ENCODE measurements at regions of chr1 and their contacts with region 1.

Region 1: GRCh38 chr1:19101244-19101643 is 108.8 kb downstream of the UBR4 start:
- DNase-seq: no peak
- CTCF ChIP-seq: no peak

Region 2: GRCh38 chr1:19113697-19114092 is 12.5 kb after region 1 on chr1:
- CTCF ChIA-PET with region 1: interaction called, 25 read pairs
- POLR2A ChIA-PET with region 1: no interaction called
- DNase-seq: peak; percentile 43
- CTCF ChIP-seq: peak; percentile 41

Measured in GM10248 (cell line).